PC-3 (cell line): ENCODE measurements at regions of chr7 and their contacts with region 1.

Region 1: GRCh38 chr7:140661121-140661520 is 11.6 kb upstream of the ADCK2 start:
- DNase-seq: no peak
- ATAC-seq: peak; percentile 70
- H3K4me3 ChIP-seq: no peak overlapping the region
- H3K27ac ChIP-seq: no peak overlapping the region
- H3K4me1 ChIP-seq: peaks cover 9% of the 10 kb centered on the region
- H3K27me3 ChIP-seq: no peaks in the 10 kb centered on the region
- CTCF ChIP-seq: peak; percentile 43; the same call in 1 of the 2 replicates

Region 2: DNA sequence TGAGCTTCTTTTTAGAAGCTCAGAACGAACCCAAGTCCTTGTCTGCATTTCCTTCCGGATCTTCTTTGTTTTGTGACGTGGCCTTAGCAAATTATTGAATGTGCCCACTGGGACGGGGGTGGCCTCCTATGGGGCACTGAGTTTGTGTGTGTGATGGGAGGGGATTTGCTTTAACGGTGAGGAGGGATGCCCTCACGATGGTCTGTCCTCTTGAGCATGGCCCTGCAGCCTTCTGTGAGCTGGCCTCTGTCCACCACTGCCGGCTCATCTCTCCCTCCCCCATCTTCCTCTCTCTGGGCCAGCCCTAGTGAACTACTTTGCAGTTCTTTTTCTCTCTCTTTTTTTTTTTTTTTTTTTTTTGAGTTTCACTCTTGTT is 118.9 kb before region 1 on chr7:
- CTCF ChIA-PET with region 1: no interaction called
- POLR2A ChIA-PET with region 1: no interaction called
- intact Hi-C with region 1: no loop called
- DNase-seq: peak; percentile 15
- ATAC-seq: peak; percentile 46
- H3K4me3 ChIP-seq: peak overlapping the region; percentile 64
- H3K27ac ChIP-seq: peak overlapping the region; percentile 96
- H3K4me1 ChIP-seq: peaks cover 23% of the 10 kb centered on the region
- H3K27me3 ChIP-seq: no peaks in the 10 kb centered on the region
- CTCF ChIP-seq: no peak

Region 3: DNA sequence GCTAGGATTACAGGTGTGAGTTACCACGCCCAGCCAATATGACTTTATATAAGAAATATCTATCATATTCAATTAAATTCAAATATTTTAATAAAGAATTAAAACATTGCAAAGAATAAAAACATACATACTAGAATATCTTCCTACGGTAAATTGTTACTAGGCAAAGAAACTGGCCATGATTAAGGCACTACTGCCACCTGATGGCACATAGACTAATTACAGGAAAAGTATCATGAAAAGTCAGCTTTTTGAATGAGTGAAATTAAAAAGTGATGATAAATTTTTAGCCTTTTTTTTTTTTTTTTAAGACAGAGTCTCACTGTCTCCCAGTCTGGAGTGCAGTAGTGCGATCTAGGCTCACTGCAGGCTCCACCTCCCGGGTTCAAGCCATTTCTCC is 322.7 kb after region 1 on chr7:
- CTCF ChIA-PET with region 1: no interaction called
- POLR2A ChIA-PET with region 1: no interaction called
- intact Hi-C with region 1: loop called (anchors 2 kb)
- DNase-seq: peak; percentile 64
- ATAC-seq: no peak
- H3K4me3 ChIP-seq: no peak overlapping the region
- H3K27ac ChIP-seq: no peak overlapping the region
- H3K4me1 ChIP-seq: peaks cover 10% of the 10 kb centered on the region
- H3K27me3 ChIP-seq: no peaks in the 10 kb centered on the region
- CTCF ChIP-seq: peak; percentile 65